K562 (cell line): ENCODE measurements at regions of chr3 and their contacts with region 1.

Region 1: GRCh38 chr3:133927540-133928066 is 31.9 kb upstream of the RAB6B start:
- DNase-seq: peak; percentile 70 to 94 (median 90)
- ATAC-seq: peak; percentile 92
- H3K4me3 ChIP-seq: peak overlapping the region; percentile 40
- H3K27ac ChIP-seq: no peak overlapping the region
- H3K4me1 ChIP-seq: peaks cover 0 to 16% of the 10 kb centered on the region in 2 experiments; a peak in 3 of 5 replicates
- H3K27me3 ChIP-seq: peaks cover 3 to 25% of the 10 kb centered on the region in 2 experiments; a peak in 4 of 5 replicates
- CTCF ChIP-seq: peak; percentile 61 to 78 (median 67)
- EP300 ChIP-seq: no peak
- POLR2A ChIP-seq: no peak
- RAD21 ChIP-seq: peak; percentile 51 to 77

Region 2: DNA sequence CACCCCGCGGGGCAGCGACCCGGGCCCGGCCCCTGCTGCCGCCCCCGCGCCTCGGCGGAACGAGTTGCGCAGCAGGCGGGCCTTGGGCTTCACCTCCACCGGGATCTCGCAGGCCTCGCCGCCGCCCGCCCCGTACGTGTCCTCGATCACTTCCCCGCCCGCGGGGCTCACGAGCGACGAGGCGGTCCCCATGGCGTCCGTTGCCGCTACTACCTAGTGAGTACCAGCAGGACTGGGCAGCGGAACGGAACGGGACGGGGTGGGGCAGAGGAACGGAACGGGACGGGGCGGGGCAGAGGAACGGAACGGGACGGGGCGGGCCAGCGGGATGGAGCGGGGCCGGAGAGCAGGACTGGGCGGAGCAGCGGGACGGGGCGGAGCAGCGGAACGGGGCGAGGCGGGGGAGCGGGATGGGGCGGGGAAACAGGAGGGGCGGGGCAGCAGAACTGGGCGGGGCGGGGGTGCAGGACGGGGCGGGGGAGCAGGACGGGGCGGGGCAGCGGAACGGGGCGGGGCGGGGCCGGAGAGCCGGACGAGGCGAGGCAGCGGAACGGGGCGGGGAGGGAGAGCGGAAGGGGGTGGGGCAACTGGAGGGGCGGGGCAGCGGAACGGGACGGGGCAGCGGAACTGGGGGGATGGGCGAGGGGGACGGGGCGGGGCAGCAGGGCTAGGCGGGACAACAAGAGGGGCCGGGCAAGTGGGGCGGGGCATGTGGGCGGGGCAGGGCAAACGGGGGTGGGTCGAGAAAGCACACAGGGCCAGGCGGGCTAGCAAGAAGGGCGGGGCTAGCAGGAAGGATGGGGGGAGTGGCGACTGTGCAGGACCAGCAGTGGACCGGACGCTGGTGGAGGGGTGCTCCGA is 1205.2 kb before region 1 on chr3 and contains the start of gene NPHP3:
- CTCF ChIA-PET with region 1: no interaction called
- POLR2A ChIA-PET with region 1: no interaction called
- in situ Hi-C with region 1: no loop called
- intact Hi-C with region 1: loop called (anchors 10 kb)
- DNase-seq: peak; percentile 92 to 94 (median 92)
- ATAC-seq: peak; percentile 91
- H3K4me3 ChIP-seq: peak within 1 kb of the TSS; percentile 70
- H3K27ac ChIP-seq: peak within 1 kb of the TSS; percentile 80
- H3K4me1 ChIP-seq: peaks cover 9 to 16% of the 10 kb centered on the region in 2 experiments; a peak in 4 of 5 replicates
- H3K27me3 ChIP-seq: no peaks in the 10 kb centered on the region
- CTCF ChIP-seq: no peak
- EP300 ChIP-seq: no peak
- POLR2A ChIP-seq: peak; percentile 36
- RAD21 ChIP-seq: no peak
- polyA plus RNA-seq, gene NPHP3: 0.62 to 1.8 TPM

Region 3: GRCh38 chr3:133831966-133832802 is 95.4 kb before region 1 on chr3:
- CTCF ChIA-PET with region 1: no interaction called
- POLR2A ChIA-PET with region 1: interaction called, 3 read pairs
- in situ Hi-C with region 1: no loop called
- intact Hi-C with region 1: loop called (anchors 5 kb)
- DNase-seq: no peak
- ATAC-seq: no peak
- H3K4me3 ChIP-seq: no peak overlapping the region
- H3K27ac ChIP-seq: no peak overlapping the region
- H3K4me1 ChIP-seq: peaks cover 0 to 5% of the 10 kb centered on the region in 2 experiments; a peak in 2 of 5 replicates
- H3K27me3 ChIP-seq: no peaks in the 10 kb centered on the region
- CTCF ChIP-seq: peak in 2 of 3 experiments; percentile 28 to 31; a peak in 1 of 6 replicates
- EP300 ChIP-seq: no peak
- POLR2A ChIP-seq: no peak
- RAD21 ChIP-seq: no peak

Region 4: GRCh38 chr3:134212906-134213665 is 285.5 kb after region 1 on chr3:
- CTCF ChIA-PET with region 1: interaction called, 13 read pairs
- POLR2A ChIA-PET with region 1: interaction called, 3 read pairs
- in situ Hi-C with region 1: no loop called
- intact Hi-C with region 1: loop called (anchors 1 kb)
- DNase-seq: peak; percentile 62 to 77 (median 64)
- ATAC-seq: peak; percentile 96
- H3K4me3 ChIP-seq: no peak overlapping the region
- H3K27ac ChIP-seq: no peak overlapping the region
- H3K4me1 ChIP-seq: no peaks in the 10 kb centered on the region; a peak in 1 of 5 replicates
- H3K27me3 ChIP-seq: no peaks in the 10 kb centered on the region
- CTCF ChIP-seq: peak; percentile 79 to 81 (median 80)
- EP300 ChIP-seq: no peak
- POLR2A ChIP-seq: no peak
- RAD21 ChIP-seq: peak; percentile 51 to 72

Region 5: GRCh38 chr3:134378384-134378783 is 450.8 kb after region 1 on chr3:
- CTCF ChIA-PET with region 1: no interaction called
- POLR2A ChIA-PET with region 1: no interaction called
- in situ Hi-C with region 1: no loop called
- intact Hi-C with region 1: loop called (anchors 5 kb)
- DNase-seq: peak; percentile 33 to 60 (median 42)
- ATAC-seq: peak; percentile 91
- H3K4me3 ChIP-seq: no peak overlapping the region
- H3K27ac ChIP-seq: no peak overlapping the region
- H3K4me1 ChIP-seq: peaks cover 0 to 9% of the 10 kb centered on the region in 2 experiments; a peak in 2 of 5 replicates
- H3K27me3 ChIP-seq: peaks cover 0 to 33% of the 10 kb centered on the region in 2 experiments; a peak in 2 of 5 replicates
- CTCF ChIP-seq: peak; percentile 47 to 61 (median 57); a peak in 5 of 6 replicates
- EP300 ChIP-seq: no peak
- POLR2A ChIP-seq: no peak
- RAD21 ChIP-seq: peak; percentile 38 to 66